ENCODE measurements at regions of chr6 and their contacts with region 1.

Region 1: DNA sequence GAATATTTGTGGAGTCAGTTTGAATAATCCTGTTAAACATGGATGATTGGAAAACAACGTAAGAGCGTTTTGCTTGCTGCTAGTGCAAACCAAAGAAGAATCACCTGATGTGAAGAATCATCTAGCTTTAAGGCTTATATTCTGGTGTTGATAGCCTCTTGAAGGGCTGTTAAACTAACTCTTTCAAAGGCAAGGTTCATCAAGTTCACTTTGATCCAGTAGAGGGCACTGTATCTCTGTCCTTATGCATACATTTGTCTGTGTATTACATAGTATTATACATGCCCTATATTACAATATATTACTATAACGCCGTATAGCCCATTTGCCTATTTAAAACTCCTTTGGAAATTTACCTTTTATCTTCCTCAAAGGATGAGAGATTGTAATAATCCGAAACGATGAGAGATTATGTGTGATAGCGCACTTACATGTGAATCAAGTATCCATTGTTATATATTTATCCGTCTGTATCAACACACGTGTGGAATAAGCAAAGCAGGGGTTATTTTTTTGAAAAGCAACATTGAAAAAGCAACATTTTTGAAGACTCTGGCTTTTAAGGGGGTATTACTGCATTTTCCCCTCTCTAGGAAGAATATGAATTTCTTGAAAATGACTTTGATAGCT is 50.8 kb upstream of the NRN1 start:
- DNase-seq: no peak
- H3K4me3 ChIP-seq: no peak overlapping the region
- H3K27ac ChIP-seq: no peak overlapping the region
- H3K4me1 ChIP-seq: no peaks in the 10 kb centered on the region
- H3K27me3 ChIP-seq: no peaks in the 10 kb centered on the region
- CTCF ChIP-seq: peak; percentile 46

Region 2: DNA sequence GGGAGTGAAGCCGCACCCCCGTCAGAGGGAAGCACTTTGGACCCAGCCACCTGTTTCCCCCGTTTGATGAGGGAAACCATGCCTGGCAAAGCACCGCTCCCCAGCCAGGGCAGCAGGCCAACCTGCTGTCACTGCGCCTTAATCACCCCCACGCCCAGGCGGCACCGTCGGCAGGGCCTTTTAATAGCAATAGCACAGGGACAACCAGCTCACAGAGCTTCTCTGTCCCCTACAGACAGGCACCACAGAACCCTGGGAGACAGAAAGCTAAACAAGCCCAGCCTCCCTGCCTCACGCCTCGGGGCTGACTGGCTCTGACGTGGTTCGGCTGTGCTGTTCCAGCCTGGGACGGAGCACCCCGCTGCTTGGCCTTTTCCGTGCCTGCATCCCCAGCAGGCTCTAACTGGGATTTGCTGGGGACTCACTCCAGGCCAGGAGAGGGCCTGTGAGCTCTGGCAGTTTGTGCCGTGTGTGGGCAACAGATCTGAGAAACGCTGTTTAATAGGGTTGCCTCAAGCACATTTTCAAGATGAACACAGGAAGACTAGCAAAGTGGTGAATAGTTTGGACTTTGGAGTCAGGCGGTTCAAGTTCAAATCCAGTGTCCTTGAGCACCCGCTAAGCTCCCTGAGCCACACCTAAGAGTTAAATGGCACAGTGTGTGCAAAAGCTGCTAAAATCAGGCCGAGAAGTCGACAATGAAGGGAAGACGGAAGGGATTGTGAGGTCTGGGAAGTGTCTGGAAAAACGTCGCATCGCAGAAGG is 274.6 kb before region 1 on chr6:
- intact Hi-C with region 1: no loop called
- DNase-seq: peak; percentile 96
- H3K4me3 ChIP-seq: no peak overlapping the region
- H3K27ac ChIP-seq: peak overlapping the region; percentile 89
- H3K4me1 ChIP-seq: peaks cover 9% of the 10 kb centered on the region
- H3K27me3 ChIP-seq: no peaks in the 10 kb centered on the region
- CTCF ChIP-seq: no peak

Region 3: GRCh38 chr6:6105472-6106036 is 48.0 kb after region 1 on chr6:
- intact Hi-C with region 1: no loop called
- DNase-seq: no peak
- H3K4me3 ChIP-seq: no peak overlapping the region
- H3K27ac ChIP-seq: no peak overlapping the region
- H3K4me1 ChIP-seq: no peaks in the 10 kb centered on the region
- H3K27me3 ChIP-seq: no peaks in the 10 kb centered on the region
- CTCF ChIP-seq: peak; percentile 20

Region 4: GRCh38 chr6:6547110-6547879 is 489.8 kb after region 1 on chr6:
- intact Hi-C with region 1: loop called (anchors 5 kb)
- DNase-seq: peak; percentile 87
- H3K4me3 ChIP-seq: peak overlapping the region; percentile 31
- H3K27ac ChIP-seq: no peak overlapping the region
- H3K4me1 ChIP-seq: peaks cover 10% of the 10 kb centered on the region
- H3K27me3 ChIP-seq: peaks cover 23% of the 10 kb centered on the region
- CTCF ChIP-seq: peak; percentile 92